ENCODE measurements at regions of chr6 and their contacts with region 1.

Region 1: DNA sequence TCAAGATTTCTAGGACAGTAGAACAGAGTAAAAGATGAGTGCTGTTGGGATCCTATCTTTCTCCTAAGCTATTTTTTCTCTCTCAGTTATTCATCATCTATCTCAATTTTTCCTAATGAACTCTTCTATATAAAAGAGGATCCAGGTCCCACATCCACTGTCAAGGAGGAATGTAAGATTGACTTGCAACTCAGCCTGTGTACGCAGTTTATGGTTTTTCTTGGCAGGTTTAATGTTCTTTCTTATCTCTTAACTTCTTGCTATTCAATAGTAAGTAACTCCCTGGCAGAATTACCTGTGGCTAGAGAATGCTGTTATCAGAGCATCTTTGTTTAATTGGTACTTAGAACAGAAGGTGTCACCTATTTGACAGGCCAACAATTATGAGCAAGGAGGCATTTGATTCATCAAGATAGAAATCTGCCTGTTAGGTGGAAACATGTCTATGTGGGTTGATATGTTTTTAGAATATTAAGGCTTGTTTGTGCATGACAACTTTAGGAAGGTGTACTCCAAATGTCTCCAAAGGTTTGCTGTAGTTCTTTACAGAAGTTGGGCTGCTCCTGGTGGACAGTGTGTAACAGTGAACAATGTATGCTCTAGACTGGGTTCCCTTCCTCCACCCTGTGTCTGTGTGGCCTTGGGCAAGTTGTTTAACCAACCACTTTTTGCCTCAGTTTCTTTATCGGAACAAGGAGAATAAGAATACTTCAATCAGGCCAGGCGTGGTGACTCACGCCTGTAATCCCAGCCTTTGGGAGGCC is 61.0 kb downstream of the SLC16A10 start:
- DNase-seq: no peak
- H3K4me3 ChIP-seq: no peak overlapping the region
- H3K27ac ChIP-seq: no peak overlapping the region
- H3K4me1 ChIP-seq: peaks cover 4% of the 10 kb centered on the region
- H3K27me3 ChIP-seq: peaks cover 2% of the 10 kb centered on the region
- CTCF ChIP-seq: no peak

Region 2: DNA sequence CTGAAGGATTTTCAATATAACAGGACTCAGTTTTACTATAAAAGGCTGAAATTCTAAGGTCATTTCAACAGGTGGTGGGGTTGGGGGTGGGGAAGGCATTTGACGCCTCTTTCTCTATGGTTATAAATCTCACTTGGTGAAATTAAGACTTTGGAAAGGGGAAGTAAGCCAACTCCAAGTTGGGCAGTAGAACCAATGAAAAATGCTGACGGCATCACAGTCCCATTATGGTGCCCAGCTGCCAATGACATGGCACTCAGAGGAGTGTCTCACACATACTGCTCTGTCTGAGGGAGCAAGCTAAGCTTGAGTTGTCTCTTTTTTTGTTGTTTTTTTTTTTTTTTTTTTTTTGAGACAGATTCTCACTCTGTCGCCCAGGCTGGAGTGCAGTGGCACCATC is 56.3 kb before region 1 on chr6:
- CTCF ChIA-PET with region 1: no interaction called
- dilution Hi-C with region 1: loop called (anchors 5 kb)
- in situ Hi-C with region 1: no loop called
- intact Hi-C with region 1: no loop called
- DNase-seq: no peak
- H3K4me3 ChIP-seq: no peak overlapping the region
- H3K27ac ChIP-seq: no peak overlapping the region
- H3K4me1 ChIP-seq: peaks cover 20% of the 10 kb centered on the region
- H3K27me3 ChIP-seq: peaks cover 20% of the 10 kb centered on the region
- CTCF ChIP-seq: no peak

Measured in mammary epithelial cell (primary cell).